ENCODE measurements at regions of chr11 and their contacts with region 1.

Region 1: GRCh38 chr11:61294717-61295595 is at the start of gene VWCE:
- DNase-seq: peak; percentile 85
- ATAC-seq: peak; percentile 85
- H3K4me3 Mint-ChIP-seq: peak within 1 kb of the TSS; percentile 85
- H3K27ac Mint-ChIP-seq: peak within 1 kb of the TSS; percentile 81
- H3K4me1 Mint-ChIP-seq: peaks cover 37% of the 10 kb centered on the region
- H3K27me3 Mint-ChIP-seq: no peaks in the 10 kb centered on the region
- total RNA-seq, gene VWCE: 2.4 to 3.1 TPM

Region 2: GRCh38 chr11:61270354-61271076 is 24.4 kb before region 1 on chr11:
- POLR2A ChIA-PET with region 1: interaction called, 10 read pairs
- DNase-seq: no peak
- ATAC-seq: no peak
- H3K4me3 Mint-ChIP-seq: no peak overlapping the region
- H3K27ac Mint-ChIP-seq: no peak overlapping the region
- H3K4me1 Mint-ChIP-seq: no peaks in the 10 kb centered on the region
- H3K27me3 Mint-ChIP-seq: no peaks in the 10 kb centered on the region

Region 3: DNA sequence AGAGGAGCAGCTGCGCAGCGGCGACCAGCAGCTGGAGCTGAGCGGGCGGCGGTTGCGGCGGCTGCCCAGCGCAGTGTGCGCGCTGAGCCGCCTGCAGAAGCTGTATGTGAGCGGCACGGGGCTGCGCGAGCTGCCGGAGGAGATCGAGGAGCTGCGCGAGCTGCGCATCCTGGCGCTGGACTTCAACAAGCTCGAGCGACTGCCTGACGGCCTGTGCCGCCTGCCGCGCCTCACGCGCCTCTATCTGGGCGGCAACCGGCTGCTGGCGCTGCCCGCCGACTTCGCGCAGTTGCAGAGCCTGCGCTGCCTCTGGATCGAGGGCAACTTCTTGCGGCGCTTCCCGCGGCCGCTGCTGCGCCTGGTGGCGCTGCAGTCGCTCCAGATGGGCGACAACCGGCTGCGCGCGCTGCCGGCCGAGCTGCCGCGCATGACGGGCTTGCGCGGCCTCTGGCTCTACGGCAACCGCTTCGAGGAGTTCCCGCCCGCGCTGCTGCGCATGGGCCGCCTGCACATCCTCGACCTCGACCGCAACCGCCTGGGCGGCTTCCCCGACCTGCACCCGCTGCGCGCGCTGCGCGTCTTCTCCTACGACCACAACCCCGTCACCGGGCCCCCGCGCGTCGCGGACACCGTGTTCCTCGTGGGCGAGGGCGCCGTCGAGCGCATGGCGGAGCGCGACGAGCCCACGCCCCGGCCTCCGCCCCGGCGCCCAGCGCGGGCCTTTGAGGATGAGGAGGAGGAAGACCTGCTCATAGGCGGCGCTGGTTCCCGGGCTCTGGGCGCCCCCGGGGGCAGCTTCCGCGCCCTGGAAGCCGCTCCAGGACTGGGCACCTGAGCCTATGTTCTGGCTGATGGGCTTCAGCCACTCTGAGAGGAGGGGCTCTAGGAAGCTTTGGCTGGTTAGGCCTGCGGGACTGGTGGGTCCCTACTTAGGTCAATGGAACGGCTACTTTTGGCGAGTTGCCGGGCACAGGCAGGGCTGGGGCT is 214.4 kb after region 1 on chr11:
- POLR2A ChIA-PET with region 1: no interaction called
- DNase-seq: peak; percentile 79
- ATAC-seq: peak; percentile 80
- H3K4me3 Mint-ChIP-seq: peak overlapping the region; percentile 25
- H3K27ac Mint-ChIP-seq: no peak overlapping the region
- H3K4me1 Mint-ChIP-seq: peaks cover 5% of the 10 kb centered on the region
- H3K27me3 Mint-ChIP-seq: peaks cover 58% of the 10 kb centered on the region